CD4-positive, alpha-beta T cell (primary cell): ENCODE measurements at regions of chr16 and their contacts with region 1.

Region 1: DNA sequence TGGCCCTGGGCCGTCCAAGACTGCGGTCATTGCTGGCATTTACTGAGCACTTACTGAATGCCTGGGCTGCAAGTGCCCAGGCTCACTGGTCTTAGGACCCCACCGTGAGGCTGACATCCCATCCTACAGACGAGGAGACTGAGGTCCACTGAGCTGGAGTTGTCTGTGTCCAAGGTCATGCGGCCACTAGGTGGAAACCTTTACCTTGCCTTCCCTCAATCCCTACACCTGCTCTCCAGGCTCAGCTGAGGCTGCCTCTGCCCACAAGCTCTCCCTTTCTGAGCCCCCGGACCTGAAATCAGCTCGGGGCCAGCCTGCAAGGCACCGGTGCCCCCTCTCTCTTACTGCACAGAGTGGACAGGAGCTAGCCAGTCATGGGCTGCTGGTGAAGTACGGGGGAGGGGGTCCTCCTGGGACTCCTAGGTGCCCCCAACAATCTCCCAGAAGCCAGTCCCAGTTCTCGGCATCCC is 1.5 kb downstream of the CASKIN1 start:
- DNase-seq: peak; percentile 24 to 83 (median 49)
- ATAC-seq: peak; percentile 82
- H3K4me3 ChIP-seq: no peak overlapping the region
- H3K4me3 Mint-ChIP-seq: peak overlapping the region; percentile 75
- H3K27ac ChIP-seq: no peak overlapping the region
- H3K27ac Mint-ChIP-seq: no peak overlapping the region
- H3K4me1 ChIP-seq: peaks cover 20% of the 10 kb centered on the region
- H3K4me1 Mint-ChIP-seq: peaks cover 10% of the 10 kb centered on the region
- H3K27me3 ChIP-seq: peaks cover 31% of the 10 kb centered on the region in 2 experiments
- H3K27me3 Mint-ChIP-seq: peaks cover 27% of the 10 kb centered on the region
- CTCF ChIP-seq: peak; percentile 53

Region 2: DNA sequence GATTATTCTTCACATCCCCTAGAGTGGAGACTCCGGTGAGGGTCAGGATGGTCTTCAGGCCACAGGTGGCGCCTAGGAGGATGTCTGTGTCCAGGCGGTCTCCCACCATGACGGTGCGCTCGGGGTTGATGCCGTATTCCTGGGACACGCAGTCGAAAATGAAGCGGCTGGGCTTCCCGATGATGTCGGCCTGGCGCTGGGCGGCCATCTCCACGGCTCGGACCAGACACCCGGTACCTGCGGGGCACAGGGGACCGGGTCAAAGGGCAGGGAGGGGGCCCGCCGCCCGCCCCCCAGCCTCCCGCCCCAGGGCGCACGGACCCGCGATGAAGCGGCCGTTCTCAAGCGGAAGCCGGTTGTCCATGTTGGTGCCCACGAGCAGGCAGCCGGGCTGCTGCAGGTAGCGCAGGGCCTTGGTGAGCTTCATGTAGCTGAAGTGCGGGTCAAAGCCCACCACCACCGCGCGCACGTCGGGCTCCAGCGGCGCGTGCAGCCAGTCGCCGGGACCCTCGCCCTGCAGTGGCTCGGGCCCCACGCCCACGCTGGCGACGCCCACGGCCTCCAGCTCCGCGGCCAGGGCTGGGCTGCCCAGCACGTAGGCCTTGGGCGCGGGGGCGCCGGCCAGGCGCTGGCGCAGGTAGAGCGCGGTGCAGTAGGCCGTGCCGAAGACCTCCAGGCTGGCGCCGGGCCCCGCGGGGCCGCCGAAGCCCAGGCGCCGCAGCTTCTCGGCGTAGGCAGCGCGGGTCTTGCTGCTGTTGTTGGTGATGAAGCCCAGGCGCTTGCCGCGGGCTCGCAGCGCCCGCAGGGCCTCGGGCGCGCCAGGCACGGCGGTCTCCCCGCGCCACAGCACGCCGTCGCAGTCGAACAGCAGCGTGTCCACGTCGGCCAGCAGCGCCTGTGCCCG is 19.2 kb after region 1 on chr16:
- CTCF ChIA-PET with region 1: interaction called, 3 read pairs
- POLR2A ChIA-PET with region 1: interaction called, 11 read pairs
- intact Hi-C with region 1: no loop called
- DNase-seq: no peak
- ATAC-seq: no peak
- H3K4me3 ChIP-seq: peak overlapping the region; percentile 34
- H3K4me3 Mint-ChIP-seq: peak overlapping the region; percentile 85
- H3K27ac ChIP-seq: peak overlapping the region in 1 of 2 donors; percentile 21
- H3K27ac Mint-ChIP-seq: peak overlapping the region; percentile 66
- H3K4me1 ChIP-seq: peaks cover 25% of the 10 kb centered on the region
- H3K4me1 Mint-ChIP-seq: peaks cover 11% of the 10 kb centered on the region
- H3K27me3 ChIP-seq: no peaks in the 10 kb centered on the region
- H3K27me3 Mint-ChIP-seq: no peaks in the 10 kb centered on the region
- CTCF ChIP-seq: no peak

Region 3: GRCh38 chr16:2251483-2252240 is 56.8 kb after region 1 on chr16 and contains the start of gene ECI1:
- CTCF ChIA-PET with region 1: interaction called, 8 read pairs
- POLR2A ChIA-PET with region 1: interaction called, 11 read pairs
- intact Hi-C with region 1: loop called in 1 of 2 experiments (anchors 2 kb)
- DNase-seq: peak; percentile 54 to 92 (median 75)
- ATAC-seq: peak; percentile 68
- H3K4me3 ChIP-seq: peak within 1 kb of the TSS; percentile 66
- H3K4me3 Mint-ChIP-seq: peak within 1 kb of the TSS; percentile 92
- H3K27ac ChIP-seq: peak within 1 kb of the TSS; percentile 53 to 80
- H3K27ac Mint-ChIP-seq: peak within 1 kb of the TSS; percentile 93
- H3K4me1 ChIP-seq: peaks cover 19% of the 10 kb centered on the region
- H3K4me1 Mint-ChIP-seq: peaks cover 11% of the 10 kb centered on the region
- H3K27me3 ChIP-seq: no peaks in the 10 kb centered on the region
- H3K27me3 Mint-ChIP-seq: no peaks in the 10 kb centered on the region
- CTCF ChIP-seq: peak; percentile 44
- total RNA-seq, gene ECI1: 10.1 to 12.5 TPM

Region 4: GRCh38 chr16:2340564-2341455 is 145.9 kb after region 1 on chr16 and contains the start of gene ABCA3:
- CTCF ChIA-PET with region 1: interaction called, 3 read pairs
- POLR2A ChIA-PET with region 1: no interaction called
- intact Hi-C with region 1: loop called in 1 of 2 experiments (anchors 10 kb)
- DNase-seq: peak; percentile 81 to 97 (median 92)
- ATAC-seq: peak; percentile 88
- H3K4me3 ChIP-seq: peak within 1 kb of the TSS; percentile 69
- H3K4me3 Mint-ChIP-seq: peak within 1 kb of the TSS; percentile 90
- H3K27ac ChIP-seq: no peak within 1 kb of the TSS
- H3K27ac Mint-ChIP-seq: peak within 1 kb of the TSS; percentile 55
- H3K4me1 ChIP-seq: peaks cover 20% of the 10 kb centered on the region
- H3K4me1 Mint-ChIP-seq: peaks cover 17% of the 10 kb centered on the region
- H3K27me3 ChIP-seq: peaks cover 0 to 2% of the 10 kb centered on the region in 2 experiments
- H3K27me3 Mint-ChIP-seq: no peaks in the 10 kb centered on the region
- CTCF ChIP-seq: peak; percentile 97
- total RNA-seq, gene ABCA3: 7.0 to 7.7 TPM

Region 5: DNA sequence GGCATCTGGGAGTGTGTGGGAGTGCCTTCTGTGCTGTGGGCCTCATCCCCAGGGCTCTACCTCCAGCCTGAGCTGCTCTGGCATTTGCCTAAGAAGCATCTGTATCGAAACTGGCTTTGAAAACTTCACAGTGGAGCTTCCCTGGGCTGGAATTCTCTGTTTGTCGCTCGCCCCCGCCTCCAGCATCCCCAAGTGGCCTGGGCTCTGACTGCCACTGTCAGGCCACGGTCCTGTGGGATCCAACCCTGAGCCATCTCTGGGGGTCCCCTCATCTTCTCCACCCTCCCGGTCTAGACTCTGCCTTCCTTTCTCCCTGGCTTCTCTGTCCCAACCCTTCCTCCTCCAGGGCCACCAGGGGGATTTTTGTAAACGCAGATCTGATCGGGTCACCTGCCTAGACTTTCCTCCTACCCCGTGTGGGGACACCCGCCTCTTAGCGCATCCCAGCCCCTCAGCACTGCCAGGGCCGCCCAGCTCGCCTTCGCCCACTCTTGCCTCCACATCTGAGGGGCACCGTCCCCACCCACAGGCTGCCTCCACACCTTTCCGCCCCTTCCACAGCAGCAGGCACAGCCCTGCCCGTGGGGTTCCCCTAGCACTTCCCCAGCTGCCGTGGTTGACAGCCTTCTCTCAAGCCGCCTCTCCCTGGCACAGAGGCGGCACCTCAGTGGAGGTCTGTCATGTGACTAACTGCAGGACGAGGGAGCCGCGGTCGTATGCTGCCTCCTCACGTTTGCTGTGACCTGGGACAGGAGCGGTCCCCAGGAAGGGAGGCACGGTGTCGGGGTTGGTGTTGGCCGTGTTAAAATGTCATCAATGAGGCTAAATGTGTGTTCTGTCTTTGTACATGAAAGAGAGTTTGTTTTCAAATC is 292.0 kb after region 1 on chr16:
- CTCF ChIA-PET with region 1: interaction called, 3 read pairs
- POLR2A ChIA-PET with region 1: interaction called, 3 read pairs
- intact Hi-C with region 1: loop called in 1 of 2 experiments (anchors 5 kb)
- DNase-seq: peak; percentile 67 to 93 (median 79)
- ATAC-seq: peak; percentile 99
- H3K4me3 ChIP-seq: no peak overlapping the region
- H3K4me3 Mint-ChIP-seq: peak overlapping the region; percentile 13
- H3K27ac ChIP-seq: no peak overlapping the region
- H3K27ac Mint-ChIP-seq: peak overlapping the region; percentile 61
- H3K4me1 ChIP-seq: peaks cover 17% of the 10 kb centered on the region
- H3K4me1 Mint-ChIP-seq: peaks cover 12% of the 10 kb centered on the region
- H3K27me3 ChIP-seq: no peaks in the 10 kb centered on the region
- H3K27me3 Mint-ChIP-seq: no peaks in the 10 kb centered on the region
- CTCF ChIP-seq: peak; percentile 65

Region 6: DNA sequence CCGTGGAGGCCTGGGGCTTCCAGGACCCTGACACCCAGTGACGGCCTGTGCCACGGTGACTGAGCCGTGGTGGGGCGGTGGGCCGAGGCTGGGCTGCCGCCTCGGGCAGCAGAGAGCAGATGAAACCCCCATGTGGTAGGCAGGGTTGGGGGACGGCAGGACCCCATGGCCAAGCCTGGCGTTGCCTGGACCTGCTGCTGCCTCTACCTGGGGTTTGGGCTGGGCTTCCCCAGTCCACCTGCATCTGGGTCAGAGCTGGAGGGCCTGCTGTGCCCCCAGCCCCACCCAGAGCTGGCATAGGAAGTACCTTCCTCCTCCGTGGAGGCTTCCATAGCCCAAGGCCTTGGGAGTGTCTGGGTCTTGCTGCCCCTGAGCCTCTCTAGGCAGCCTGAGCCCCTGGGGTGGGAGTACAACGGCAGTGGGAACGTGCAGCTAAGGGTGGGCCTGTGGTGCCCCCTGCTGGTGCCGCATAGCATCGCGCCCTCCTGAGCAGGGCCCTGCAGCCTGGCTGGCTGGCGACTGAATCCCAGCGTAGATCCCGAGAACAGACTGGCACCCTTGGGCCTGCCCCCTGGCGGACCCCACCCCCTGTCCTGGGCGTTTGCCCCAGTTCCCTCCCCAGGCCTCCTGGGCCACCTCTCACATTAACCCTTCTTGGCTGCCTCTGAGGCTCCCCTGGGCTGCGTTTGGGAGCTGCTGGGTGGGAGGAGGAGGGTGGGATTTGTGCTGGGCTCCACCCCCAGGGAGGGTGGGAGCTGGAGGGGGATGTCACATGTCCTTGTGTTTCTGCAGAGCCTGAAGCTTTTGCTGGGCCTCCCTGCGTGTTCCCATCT is 306.2 kb after region 1 on chr16:
- CTCF ChIA-PET with region 1: interaction called, 17 read pairs
- POLR2A ChIA-PET with region 1: no interaction called
- intact Hi-C with region 1: loop called (anchors 1 kb)
- DNase-seq: peak; percentile 67 to 89 (median 76)
- ATAC-seq: peak; percentile 99
- H3K4me3 ChIP-seq: no peak overlapping the region
- H3K4me3 Mint-ChIP-seq: no peak overlapping the region
- H3K27ac ChIP-seq: no peak overlapping the region
- H3K27ac Mint-ChIP-seq: no peak overlapping the region
- H3K4me1 ChIP-seq: peaks cover 7% of the 10 kb centered on the region
- H3K4me1 Mint-ChIP-seq: peaks cover 4% of the 10 kb centered on the region
- H3K27me3 ChIP-seq: no peaks in the 10 kb centered on the region
- H3K27me3 Mint-ChIP-seq: no peaks in the 10 kb centered on the region
- CTCF ChIP-seq: peak; percentile 97